Activated B cell treated with CpG ODN at 0.5 μM for 24 hours (primary cell): ENCODE measurements at regions of chr4 and their contacts with region 1.

Region 1: DNA sequence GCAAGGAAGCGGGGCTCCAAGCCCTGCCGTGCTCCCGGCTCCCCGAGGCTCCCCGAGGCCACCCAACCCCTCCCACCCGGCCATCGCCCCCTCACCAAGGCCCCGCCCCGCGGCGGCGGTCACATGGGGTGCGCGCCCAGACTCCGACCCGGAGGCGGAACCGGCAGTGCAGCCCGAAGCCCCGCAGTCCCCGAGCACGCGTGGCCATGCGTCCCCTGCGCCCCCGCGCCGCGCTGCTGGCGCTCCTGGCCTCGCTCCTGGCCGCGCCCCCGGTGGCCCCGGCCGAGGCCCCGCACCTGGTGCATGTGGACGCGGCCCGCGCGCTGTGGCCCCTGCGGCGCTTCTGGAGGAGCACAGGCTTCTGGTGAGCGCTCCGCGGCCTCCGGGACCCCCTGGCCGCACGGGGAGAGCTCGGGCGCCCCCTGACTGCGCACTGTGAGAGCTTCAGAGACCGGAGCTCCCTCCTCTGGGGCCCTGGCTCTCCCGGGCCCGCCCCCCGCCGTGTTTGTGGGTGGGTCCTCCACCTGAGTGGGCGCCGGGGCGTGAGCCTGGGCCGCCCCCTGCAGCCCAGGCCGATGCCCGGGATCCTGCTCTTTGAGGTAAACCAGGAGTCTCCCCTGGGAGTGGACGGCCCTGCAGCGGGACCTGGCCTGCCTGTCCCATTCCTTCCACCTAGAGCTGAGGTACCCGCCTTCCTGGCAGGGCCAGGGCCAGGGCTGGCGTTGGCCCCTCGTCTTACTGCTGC is at the start of gene IDUA:
- DNase-seq: peak; percentile 86
- ATAC-seq: peak; percentile 87
- H3K4me3 Mint-ChIP-seq: peak within 1 kb of the TSS; percentile 83
- H3K27ac Mint-ChIP-seq: peak within 1 kb of the TSS; percentile 76
- H3K4me1 Mint-ChIP-seq: peaks cover 19% of the 10 kb centered on the region
- H3K27me3 Mint-ChIP-seq: no peaks in the 10 kb centered on the region
- CTCF ChIP-seq: no peak
- total RNA-seq, gene IDUA: 24.7 and 32.9 TPM in 2 replicates

Region 2: DNA sequence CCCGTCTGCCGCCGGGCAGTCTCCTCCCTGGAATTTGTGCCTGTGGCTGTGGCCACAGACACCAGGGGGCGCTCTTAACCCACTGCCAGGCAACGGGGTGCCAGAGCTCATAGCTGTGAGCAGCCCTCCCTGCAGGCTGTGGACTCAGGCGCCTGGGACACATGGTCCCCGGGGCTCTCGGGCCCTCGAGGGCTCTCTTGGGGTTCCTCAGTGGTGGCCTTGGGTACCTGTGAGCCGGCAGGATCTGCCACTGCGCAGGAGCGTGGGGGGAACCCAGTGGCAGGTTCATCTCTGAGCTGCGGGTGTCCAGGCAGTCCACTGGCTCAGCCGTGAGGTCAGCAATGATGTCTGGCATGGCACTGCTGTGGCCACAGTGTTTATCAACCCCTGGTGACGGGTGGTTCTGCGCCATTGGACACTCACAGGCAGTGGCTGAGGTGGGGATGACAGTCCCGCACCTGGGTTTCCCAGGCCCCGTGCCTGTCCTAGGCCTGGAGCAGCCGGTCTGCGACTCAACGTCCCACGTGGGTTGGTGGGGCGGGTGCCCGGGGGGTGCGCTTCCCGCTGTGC is 244.2 kb before region 1 on chr4:
- CTCF ChIA-PET with region 1: interaction called, 43 read pairs
- POLR2A ChIA-PET with region 1: interaction called, 17 read pairs
- intact Hi-C with region 1: loop called (anchors 2 kb)
- DNase-seq: peak; percentile 73
- ATAC-seq: peak; percentile 87
- H3K4me3 Mint-ChIP-seq: no peak overlapping the region
- H3K27ac Mint-ChIP-seq: no peak overlapping the region
- H3K4me1 Mint-ChIP-seq: peaks cover 1% of the 10 kb centered on the region
- H3K27me3 Mint-ChIP-seq: no peaks in the 10 kb centered on the region
- CTCF ChIP-seq: peak; percentile 96

Region 3: GRCh38 chr4:876780-877179 is 110.3 kb before region 1 on chr4:
- CTCF ChIA-PET with region 1: interaction called, 4 read pairs
- POLR2A ChIA-PET with region 1: no interaction called
- intact Hi-C with region 1: loop called (anchors 1 kb)
- DNase-seq: no peak
- ATAC-seq: no peak
- H3K4me3 Mint-ChIP-seq: no peak overlapping the region
- H3K27ac Mint-ChIP-seq: no peak overlapping the region
- H3K4me1 Mint-ChIP-seq: no peaks in the 10 kb centered on the region
- H3K27me3 Mint-ChIP-seq: no peaks in the 10 kb centered on the region
- CTCF ChIP-seq: no peak

Region 4: DNA sequence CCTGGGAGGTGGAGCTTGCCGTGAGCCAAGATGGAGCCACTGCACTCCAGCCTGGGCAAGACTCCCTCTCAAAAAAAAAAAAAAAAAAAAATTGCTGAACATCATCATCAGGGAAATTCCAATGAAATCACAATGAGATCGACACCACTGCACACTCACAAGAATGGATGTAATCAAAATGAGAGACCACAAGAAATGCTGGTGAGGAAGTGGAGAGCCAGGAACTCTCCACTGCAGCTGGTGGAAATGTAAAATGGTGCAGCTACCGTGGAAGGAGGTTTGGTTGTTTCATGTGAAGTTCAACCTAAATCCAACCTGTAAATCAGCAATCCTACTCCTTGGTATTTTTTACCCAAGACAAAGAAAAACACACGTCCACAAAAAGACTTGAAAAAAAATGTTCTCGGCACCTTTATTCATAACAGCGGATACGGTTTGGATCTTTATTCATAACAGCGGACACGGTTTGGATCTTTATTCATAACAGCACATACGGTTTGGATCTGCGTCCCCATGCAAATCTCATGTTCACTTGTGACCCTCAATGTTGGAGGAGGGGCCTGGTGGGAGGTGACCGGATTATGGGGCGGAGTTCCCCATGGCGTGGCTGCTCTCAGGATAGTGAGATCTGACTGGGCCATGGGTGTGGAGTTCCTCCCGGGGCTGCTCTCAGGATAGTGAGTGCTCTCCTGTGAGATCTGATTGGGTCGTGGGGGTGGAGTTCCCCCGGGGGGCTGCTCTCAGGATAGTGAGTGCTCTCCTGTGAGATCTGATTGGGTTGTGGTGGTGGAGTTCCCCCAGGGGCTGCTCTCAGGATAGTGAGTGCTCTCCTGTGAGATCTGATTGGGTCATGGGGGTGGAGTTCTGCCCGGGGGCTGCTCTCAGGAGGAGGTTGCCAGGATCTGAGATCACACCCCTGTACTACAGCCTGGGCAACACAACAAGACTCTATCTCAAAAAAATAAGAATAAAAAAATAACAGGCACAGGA is 62.6 kb before region 1 on chr4:
- CTCF ChIA-PET with region 1: interaction called, 8 read pairs
- POLR2A ChIA-PET with region 1: interaction called, 3 read pairs
- intact Hi-C with region 1: loop called (anchors 5 kb)
- DNase-seq: no peak
- ATAC-seq: peak; percentile 37
- H3K4me3 Mint-ChIP-seq: peak overlapping the region; percentile 29
- H3K27ac Mint-ChIP-seq: peak overlapping the region; percentile 70
- H3K4me1 Mint-ChIP-seq: peaks cover 78% of the 10 kb centered on the region
- H3K27me3 Mint-ChIP-seq: no peaks in the 10 kb centered on the region
- CTCF ChIP-seq: no peak

Region 5: GRCh38 chr4:973431-974397 is 13.3 kb before region 1 on chr4 and contains the start of gene DGKQ:
- CTCF ChIA-PET with region 1: no interaction called
- POLR2A ChIA-PET with region 1: interaction called, 3 read pairs
- intact Hi-C with region 1: loop called (anchors 1 kb)
- DNase-seq: peak; percentile 87
- ATAC-seq: peak; percentile 98
- H3K4me3 Mint-ChIP-seq: peak within 1 kb of the TSS; percentile 60
- H3K27ac Mint-ChIP-seq: no peak within 1 kb of the TSS
- H3K4me1 Mint-ChIP-seq: peaks cover 13% of the 10 kb centered on the region
- H3K27me3 Mint-ChIP-seq: no peaks in the 10 kb centered on the region
- CTCF ChIP-seq: no peak
- total RNA-seq, gene DGKQ: 16.3 and 16.4 TPM in 2 replicates

Region 6: DNA sequence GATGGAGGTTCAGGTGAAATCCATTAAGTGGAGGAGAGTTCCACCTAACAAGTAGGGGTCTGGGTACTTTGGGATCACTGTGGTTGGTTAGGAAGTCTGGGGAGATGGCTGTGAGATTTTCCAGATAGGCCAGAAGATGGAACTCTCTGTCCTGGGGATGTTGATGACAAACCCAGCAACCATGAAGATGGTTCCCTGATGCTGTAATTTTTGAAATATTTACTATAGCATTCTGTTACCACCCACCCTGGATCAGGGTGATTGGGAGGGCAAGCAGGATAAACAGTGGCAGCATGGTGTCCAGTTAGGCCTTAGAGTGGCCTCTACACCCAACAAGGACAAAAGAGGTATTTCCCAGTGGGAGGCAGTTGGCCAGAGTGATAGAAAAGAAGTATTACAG is 1037.6 kb after region 1 on chr4:
- CTCF ChIA-PET with region 1: no interaction called
- POLR2A ChIA-PET with region 1: no interaction called
- intact Hi-C with region 1: no loop called
- DNase-seq: no peak
- ATAC-seq: no peak
- H3K4me3 Mint-ChIP-seq: no peak overlapping the region
- H3K27ac Mint-ChIP-seq: no peak overlapping the region
- H3K4me1 Mint-ChIP-seq: no peaks in the 10 kb centered on the region
- H3K27me3 Mint-ChIP-seq: peaks cover 48% of the 10 kb centered on the region
- CTCF ChIP-seq: no peak